ENCODE measurements at regions of chr2 and their contacts with region 1.

Region 1: DNA sequence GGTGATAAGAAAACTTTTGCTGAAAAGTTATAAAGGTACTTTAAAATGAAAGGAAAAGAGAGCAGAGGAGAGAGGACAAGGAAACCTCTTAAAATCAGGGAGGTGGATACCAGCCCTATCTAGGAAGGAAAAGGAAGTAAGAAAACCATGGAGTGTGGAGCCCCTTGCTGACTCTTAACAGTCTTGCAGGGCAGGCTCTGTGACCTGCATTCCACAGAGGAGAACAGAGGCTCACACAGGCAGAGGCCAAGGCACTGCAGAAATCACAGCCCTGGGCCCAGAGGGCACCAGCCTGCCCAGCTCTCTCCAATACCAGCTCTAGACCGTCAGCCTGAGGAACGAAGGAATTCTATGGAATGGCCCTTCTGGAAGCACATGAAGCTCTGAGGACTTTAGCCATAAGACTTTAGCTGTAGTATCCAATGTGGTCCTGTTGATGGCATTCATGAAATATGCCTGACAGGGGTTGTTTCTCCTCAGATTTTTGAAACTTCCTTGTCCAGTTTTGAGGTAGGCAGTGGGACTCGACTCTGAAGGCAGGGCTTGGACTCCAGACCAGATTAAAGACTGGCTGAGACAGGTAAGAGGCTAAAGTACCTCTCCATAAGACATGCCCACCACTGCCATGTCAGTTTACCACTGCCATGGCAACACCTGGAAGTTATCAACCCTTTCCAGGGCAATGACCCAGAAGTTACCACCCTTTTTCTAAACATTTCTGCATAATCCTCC is 216.3 kb downstream of the ANAPC1 start:
- DNase-seq: peak in 1 of 9 donors; percentile 18
- ATAC-seq: peak; percentile 45
- H3K4me3 ChIP-seq: no peak overlapping the region
- H3K4me3 Mint-ChIP-seq: no peak overlapping the region
- H3K27ac ChIP-seq: no peak overlapping the region
- H3K27ac Mint-ChIP-seq: no peak overlapping the region
- H3K4me1 ChIP-seq: no peaks in the 10 kb centered on the region
- H3K4me1 Mint-ChIP-seq: peaks cover 0 to 15% (median 0%) of the 10 kb centered on the region in 7 donors
- H3K27me3 ChIP-seq: no peaks in the 10 kb centered on the region
- H3K27me3 Mint-ChIP-seq: peaks cover 0 to 18% (median 3%) of the 10 kb centered on the region in 5 donors

Region 2: DNA sequence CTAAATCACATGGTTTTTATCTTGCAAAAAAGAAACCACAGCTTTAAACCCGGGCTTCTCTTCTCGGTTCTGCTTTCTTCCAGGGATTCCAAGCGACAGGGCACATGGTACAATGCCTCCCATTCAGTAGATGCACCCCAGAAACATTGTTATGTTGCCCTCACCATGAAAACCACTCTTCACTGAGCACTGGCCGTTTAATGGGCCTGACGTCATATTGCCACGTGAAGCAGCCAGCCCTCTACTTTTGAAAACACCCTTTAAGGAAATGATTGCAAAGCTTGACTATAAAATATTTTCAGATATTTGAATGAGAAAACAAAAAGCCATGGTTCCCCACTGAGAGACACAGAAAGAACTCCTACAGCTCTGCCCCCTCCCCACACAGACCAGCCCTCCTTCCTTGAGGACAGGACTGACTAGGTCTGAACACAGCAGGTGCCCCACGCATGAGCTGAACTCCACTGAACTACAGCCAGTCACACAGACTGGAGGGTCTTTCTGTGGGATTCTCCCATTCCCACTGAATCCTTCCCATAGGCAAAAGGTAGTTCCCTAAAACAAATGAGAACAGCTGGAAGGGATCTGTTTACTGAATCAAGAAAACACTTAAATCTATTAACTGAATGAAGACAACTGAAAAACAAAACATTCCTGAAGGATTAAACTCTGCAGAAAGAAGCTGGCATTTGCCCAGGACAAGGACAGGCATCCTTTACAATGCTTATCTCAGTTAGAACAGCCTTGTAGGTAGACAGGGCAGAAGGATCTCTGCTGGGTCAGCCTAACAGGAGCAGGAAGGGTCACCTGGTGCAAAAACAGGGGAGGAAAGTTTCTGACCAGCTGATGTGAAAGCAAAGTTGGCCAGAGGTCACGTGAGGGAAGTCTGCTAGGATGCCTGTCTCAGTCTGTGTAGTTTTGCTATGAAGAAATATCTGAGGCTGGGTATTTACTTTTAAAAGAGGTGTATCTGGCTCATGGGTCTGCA is 132.6 kb before region 1 on chr2:
- CTCF ChIA-PET with region 1: no interaction called
- POLR2A ChIA-PET with region 1: no interaction called
- intact Hi-C with region 1: no loop called
- DNase-seq: no peak
- ATAC-seq: peak; percentile 22
- H3K4me3 ChIP-seq: no peak overlapping the region
- H3K4me3 Mint-ChIP-seq: peak overlapping the region in 3 of 10 donors; percentile 6 to 66 (median 42)
- H3K27ac ChIP-seq: no peak overlapping the region
- H3K27ac Mint-ChIP-seq: peak overlapping the region in 1 of 9 donors; percentile 85
- H3K4me1 ChIP-seq: peaks cover 0 to 6% of the 10 kb centered on the region in 2 donors
- H3K4me1 Mint-ChIP-seq: peaks cover 0 to 37% (median 3%) of the 10 kb centered on the region in 7 donors
- H3K27me3 ChIP-seq: no peaks in the 10 kb centered on the region
- H3K27me3 Mint-ChIP-seq: peaks cover 0 to 7% (median 0%) of the 10 kb centered on the region in 5 donors

Region 3: DNA sequence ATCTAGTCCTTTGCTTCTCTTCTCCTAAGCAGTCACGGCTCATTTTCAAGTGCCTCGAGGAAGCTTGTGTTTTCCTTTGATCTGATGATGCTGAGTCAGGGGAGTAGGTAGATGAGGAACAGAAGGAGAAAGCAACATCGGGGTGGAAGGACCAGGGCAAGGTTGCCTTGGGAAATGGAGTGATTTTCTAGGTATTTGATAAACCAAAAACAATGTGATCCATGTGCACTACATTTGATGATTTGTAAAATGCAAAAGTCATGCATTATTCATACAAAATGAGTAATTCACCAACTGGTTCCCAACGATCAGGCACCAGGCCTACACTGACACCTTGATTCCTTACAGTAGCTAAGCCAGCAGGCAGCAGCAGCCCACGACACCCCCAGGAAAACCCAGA is 10.9 kb after region 1 on chr2:
- CTCF ChIA-PET with region 1: no interaction called
- POLR2A ChIA-PET with region 1: no interaction called
- intact Hi-C with region 1: loop called in 1 of 2 experiments (anchors 1 kb)
- DNase-seq: no peak
- ATAC-seq: peak; percentile 51
- H3K4me3 ChIP-seq: no peak overlapping the region
- H3K4me3 Mint-ChIP-seq: no peak overlapping the region
- H3K27ac ChIP-seq: no peak overlapping the region
- H3K27ac Mint-ChIP-seq: no peak overlapping the region
- H3K4me1 ChIP-seq: no peaks in the 10 kb centered on the region
- H3K4me1 Mint-ChIP-seq: peaks cover 0 to 13% (median 0%) of the 10 kb centered on the region in 7 donors
- H3K27me3 ChIP-seq: no peaks in the 10 kb centered on the region
- H3K27me3 Mint-ChIP-seq: peaks cover 0 to 31% (median 0%) of the 10 kb centered on the region in 5 donors